Endothelial cell of umbilical vein (primary cell): ENCODE measurements at regions of chr2 and their contacts with region 1.

Region 1: GRCh38 chr2:85551698-85552678 is 9.3 kb downstream of the GGCX start:
- DNase-seq: peak; percentile 86
- H3K4me3 ChIP-seq: no peak overlapping the region
- H3K27ac ChIP-seq: no peak overlapping the region
- H3K4me1 ChIP-seq: peaks cover 17% of the 10 kb centered on the region
- H3K27me3 ChIP-seq: no peaks in the 10 kb centered on the region
- CTCF ChIP-seq: peak; percentile 82 to 94
- POLR2A ChIP-seq: no peak

Region 2: GRCh38 chr2:85302121-85302520 is 249.9 kb before region 1 on chr2:
- CTCF ChIA-PET with region 1: interaction called, 19 read pairs
- POLR2A ChIA-PET with region 1: no interaction called
- dilution Hi-C with region 1: no loop called
- intact Hi-C with region 1: no loop called
- DNase-seq: no peak
- H3K4me3 ChIP-seq: no peak overlapping the region
- H3K27ac ChIP-seq: no peak overlapping the region
- H3K4me1 ChIP-seq: no peaks in the 10 kb centered on the region
- H3K27me3 ChIP-seq: no peaks in the 10 kb centered on the region
- CTCF ChIP-seq: no peak
- POLR2A ChIP-seq: no peak

Region 3: GRCh38 chr2:85354286-85355072 is 197.5 kb before region 1 on chr2 and contains the starts of genes ELMOD3 and RETSAT:
- CTCF ChIA-PET with region 1: interaction called, 8 read pairs
- POLR2A ChIA-PET with region 1: interaction called, 3 read pairs
- dilution Hi-C with region 1: no loop called
- intact Hi-C with region 1: loop called (anchors 5 kb)
- DNase-seq: peak; percentile 99
- H3K4me3 ChIP-seq: peak within 1 kb of the TSS; percentile 78 to 97 (median 87)
- H3K27ac ChIP-seq: peak within 1 kb of the TSS; percentile 44
- H3K4me1 ChIP-seq: peaks cover 8% of the 10 kb centered on the region
- H3K27me3 ChIP-seq: no peaks in the 10 kb centered on the region
- CTCF ChIP-seq: no peak
- POLR2A ChIP-seq: peak; percentile 98
- total RNA-seq, gene ELMOD3: 12.3 and 18.5 TPM in 2 replicates
- total RNA-seq, gene RETSAT: 49.9 and 59.1 TPM in 2 replicates

Region 4: DNA sequence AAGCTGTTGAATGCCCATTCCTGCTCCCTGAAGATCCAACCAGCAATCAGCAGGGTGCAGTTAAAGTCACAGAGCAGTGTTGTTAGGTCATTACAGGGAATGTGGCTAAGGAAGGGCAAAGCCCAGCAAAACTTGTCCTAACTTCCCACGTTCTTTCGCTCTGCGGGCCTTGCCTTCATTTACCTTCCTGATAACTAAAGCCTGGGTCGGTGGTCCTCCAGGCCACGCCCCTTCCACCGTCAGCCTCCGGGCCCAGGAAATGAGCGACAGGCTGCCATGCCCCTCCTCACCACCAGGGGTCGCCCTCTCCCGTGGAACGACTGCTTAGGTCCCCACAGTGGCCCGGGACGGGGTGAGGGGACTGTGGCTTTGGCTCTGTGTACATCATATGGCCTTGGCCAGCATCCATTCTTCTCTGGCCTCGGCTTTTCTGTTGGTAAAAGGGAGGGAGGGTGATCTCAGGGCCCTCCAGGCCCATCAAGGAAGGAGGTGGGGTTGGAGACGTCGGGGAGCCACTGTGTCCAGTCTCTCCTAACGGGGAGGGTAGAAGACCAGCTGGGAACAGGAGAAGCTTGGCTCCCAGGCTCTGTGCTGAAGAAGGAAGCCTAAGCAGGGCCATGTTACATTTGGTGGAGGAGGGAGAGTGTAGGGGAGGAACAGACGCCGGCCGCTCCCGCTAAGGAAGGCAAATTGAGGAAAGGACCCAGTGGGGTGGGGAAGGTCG is 131.3 kb before region 1 on chr2:
- CTCF ChIA-PET with region 1: interaction called, 236 read pairs
- POLR2A ChIA-PET with region 1: interaction called, 13 read pairs
- dilution Hi-C with region 1: no loop called
- intact Hi-C with region 1: loop called (anchors 1 kb)
- DNase-seq: peak; percentile 79
- H3K4me3 ChIP-seq: no peak overlapping the region
- H3K27ac ChIP-seq: peak overlapping the region; percentile 16
- H3K4me1 ChIP-seq: peaks cover 9% of the 10 kb centered on the region
- H3K27me3 ChIP-seq: no peaks in the 10 kb centered on the region
- CTCF ChIP-seq: peak; percentile 99
- POLR2A ChIP-seq: no peak

Region 5: GRCh38 chr2:85602476-85603234 is 50.7 kb after region 1 on chr2 and contains the start of gene TMEM150A:
- CTCF ChIA-PET with region 1: interaction called, 5 read pairs
- POLR2A ChIA-PET with region 1: interaction called, 3 read pairs
- dilution Hi-C with region 1: no loop called
- intact Hi-C with region 1: loop called (anchors 2 kb)
- DNase-seq: peak; percentile 88
- H3K4me3 ChIP-seq: peak within 1 kb of the TSS; percentile 64 to 98 (median 65)
- H3K27ac ChIP-seq: peak within 1 kb of the TSS; percentile 23
- H3K4me1 ChIP-seq: peaks cover 24% of the 10 kb centered on the region
- H3K27me3 ChIP-seq: no peaks in the 10 kb centered on the region
- CTCF ChIP-seq: peak; percentile 32 to 51
- POLR2A ChIP-seq: peak; percentile 87
- total RNA-seq, gene TMEM150A: 14.6 and 17.7 TPM in 2 replicates

Region 6: DNA sequence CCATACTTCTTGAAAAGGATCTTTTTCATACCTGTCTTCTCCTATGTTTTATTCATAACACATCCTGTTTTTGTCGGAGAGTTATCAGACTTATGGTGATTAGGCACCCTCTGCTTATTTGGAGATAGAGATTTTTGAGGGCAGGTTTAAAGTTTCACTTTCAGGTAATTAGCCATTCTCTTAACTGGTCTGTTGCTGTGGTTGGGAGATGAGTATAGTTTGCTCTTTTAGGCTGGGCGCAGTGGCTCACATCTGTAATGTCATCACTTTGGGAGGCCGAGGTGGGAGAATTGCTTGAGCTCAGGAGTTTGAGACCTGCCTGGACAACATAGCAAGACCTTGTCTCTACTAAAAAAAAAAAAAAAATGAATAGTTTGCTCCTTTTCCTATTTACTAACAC is 90.7 kb after region 1 on chr2:
- CTCF ChIA-PET with region 1: interaction called, 11 read pairs
- POLR2A ChIA-PET with region 1: no interaction called
- dilution Hi-C with region 1: no loop called
- intact Hi-C with region 1: no loop called
- DNase-seq: no peak
- H3K4me3 ChIP-seq: no peak overlapping the region
- H3K27ac ChIP-seq: no peak overlapping the region
- H3K4me1 ChIP-seq: no peaks in the 10 kb centered on the region
- H3K27me3 ChIP-seq: no peaks in the 10 kb centered on the region
- CTCF ChIP-seq: no peak
- POLR2A ChIP-seq: no peak